ENCODE measurements at regions of chr6 and their contacts with region 1.

Region 1: GRCh38 chr6:117440558-117441525 is 15.1 kb upstream of the ROS1 start:
- DNase-seq: peak; percentile 93
- H3K4me3 Mint-ChIP-seq: peak overlapping the region; percentile 66
- H3K27ac Mint-ChIP-seq: peak overlapping the region; percentile 97
- H3K4me1 Mint-ChIP-seq: peaks cover 44% of the 10 kb centered on the region
- H3K27me3 Mint-ChIP-seq: no peaks in the 10 kb centered on the region
- CTCF ChIP-seq: no peak

Region 2: GRCh38 chr6:117389227-117390057 is 51.4 kb before region 1 on chr6:
- CTCF ChIA-PET with region 1: interaction called, 3 read pairs
- POLR2A ChIA-PET with region 1: interaction called, 27 read pairs
- intact Hi-C with region 1: no loop called
- DNase-seq: peak; percentile 90
- H3K4me3 Mint-ChIP-seq: no peak overlapping the region
- H3K27ac Mint-ChIP-seq: peak overlapping the region; percentile 73
- H3K4me1 Mint-ChIP-seq: peaks cover 32% of the 10 kb centered on the region
- H3K27me3 Mint-ChIP-seq: no peaks in the 10 kb centered on the region
- CTCF ChIP-seq: no peak

Region 3: GRCh38 chr6:117414772-117415171 is 26.1 kb before region 1 on chr6:
- CTCF ChIA-PET with region 1: interaction called, 6 read pairs
- POLR2A ChIA-PET with region 1: interaction called, 10 read pairs
- intact Hi-C with region 1: no loop called
- DNase-seq: no peak
- H3K4me3 Mint-ChIP-seq: no peak overlapping the region
- H3K27ac Mint-ChIP-seq: peak overlapping the region; percentile 88
- H3K4me1 Mint-ChIP-seq: peaks cover 64% of the 10 kb centered on the region
- H3K27me3 Mint-ChIP-seq: no peaks in the 10 kb centered on the region
- CTCF ChIP-seq: no peak

Region 4: DNA sequence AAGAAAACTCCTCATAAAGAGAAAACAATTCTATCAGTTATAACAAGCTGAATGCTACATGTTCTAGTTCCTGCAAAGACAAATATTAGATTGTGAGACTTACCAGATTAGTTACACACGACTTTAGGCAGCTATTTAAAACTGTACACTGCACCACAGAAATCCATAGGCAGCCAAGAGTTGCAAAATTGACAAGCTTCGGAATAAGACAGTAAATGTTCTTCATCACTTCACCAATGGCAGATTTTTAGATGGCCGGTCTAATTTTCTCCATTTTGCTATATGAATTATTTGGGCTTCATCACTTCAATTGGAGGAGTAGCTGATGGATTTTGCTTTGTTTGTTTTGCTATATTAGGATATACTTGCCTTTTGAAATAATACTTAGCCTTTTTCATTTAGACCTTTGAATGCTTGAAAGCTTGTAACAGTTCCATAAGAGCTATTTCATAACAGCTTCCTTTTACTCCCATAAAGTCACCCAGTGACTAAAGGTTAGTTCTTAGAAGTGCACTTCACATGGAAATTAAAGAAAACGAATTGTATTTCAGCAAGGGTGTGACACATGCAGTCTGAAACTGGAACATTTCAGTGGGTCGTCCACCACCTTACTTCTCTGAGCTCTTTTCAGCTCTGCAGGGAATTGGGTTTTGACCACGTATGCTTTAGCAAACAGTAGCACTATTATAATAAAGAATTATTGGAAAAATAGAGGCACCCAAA is 15.2 kb before region 1 on chr6 and contains the start of gene ROS1:
- CTCF ChIA-PET with region 1: interaction called, 11 read pairs
- POLR2A ChIA-PET with region 1: interaction called, 222 read pairs
- intact Hi-C with region 1: loop called (anchors 1 kb)
- DNase-seq: peak; percentile 70
- H3K4me3 Mint-ChIP-seq: peak within 1 kb of the TSS; percentile 79
- H3K27ac Mint-ChIP-seq: peak within 1 kb of the TSS; percentile 76
- H3K4me1 Mint-ChIP-seq: peaks cover 24% of the 10 kb centered on the region
- H3K27me3 Mint-ChIP-seq: no peaks in the 10 kb centered on the region
- CTCF ChIP-seq: no peak
- total RNA-seq, gene ROS1: 63.0 and 69.6 TPM in 2 replicates